BJ (cell line): ENCODE measurements at regions of chr22 and their contacts with region 1.

Region 1: GRCh38 chr22:17171313-17172171 is 12.5 kb upstream of the HDHD5 start:
- DNase-seq: peak; percentile 24
- H3K4me3 ChIP-seq: peak overlapping the region; percentile 65
- H3K27me3 ChIP-seq: no peaks in the 10 kb centered on the region; the same call in 1 of the 2 replicates
- CTCF ChIP-seq: peak; percentile 97

Region 2: GRCh38 chr22:17046566-17047348 is 124.8 kb before region 1 on chr22:
- CTCF ChIA-PET with region 1: no interaction called
- POLR2A ChIA-PET with region 1: no interaction called
- DNase-seq: no peak
- H3K4me3 ChIP-seq: no peak overlapping the region
- H3K27me3 ChIP-seq: no peaks in the 10 kb centered on the region
- CTCF ChIP-seq: no peak

Region 3: DNA sequence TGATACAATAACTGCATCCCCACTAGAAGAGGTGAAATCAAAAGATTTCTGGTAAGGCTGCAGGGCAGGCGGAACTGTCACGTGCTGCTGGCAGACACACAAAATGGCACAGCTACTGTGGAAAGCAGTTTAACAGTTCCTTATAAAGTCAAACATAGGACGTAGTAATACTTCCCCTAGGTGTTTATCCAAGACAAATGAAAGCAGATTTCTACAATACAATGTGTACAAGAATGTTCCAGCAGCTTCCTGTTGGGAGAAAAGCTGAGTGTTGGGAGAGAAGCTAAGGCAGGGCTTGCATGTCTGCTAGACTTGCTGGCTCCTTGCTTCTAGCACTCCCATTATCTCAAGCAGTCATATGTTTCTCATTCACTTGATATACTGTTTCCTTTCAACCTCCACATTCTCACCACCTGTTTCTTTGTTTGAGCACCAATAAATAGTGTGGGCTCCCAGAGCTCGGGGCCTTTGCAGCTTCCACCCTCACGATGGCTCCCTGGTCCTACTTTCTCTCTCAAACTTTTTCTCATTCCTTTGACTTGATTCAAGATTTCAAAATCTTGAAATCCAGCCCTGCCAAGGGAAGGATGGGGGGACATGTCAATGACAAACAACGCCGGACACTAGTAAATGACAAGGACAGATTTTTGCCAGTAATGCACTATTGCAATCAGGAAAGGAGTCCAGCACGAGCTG is 108.0 kb before region 1 on chr22:
- CTCF ChIA-PET with region 1: interaction called, 16 read pairs
- POLR2A ChIA-PET with region 1: no interaction called
- DNase-seq: no peak
- H3K4me3 ChIP-seq: no peak overlapping the region
- H3K27me3 ChIP-seq: no peaks in the 10 kb centered on the region
- CTCF ChIP-seq: no peak

Region 4: DNA sequence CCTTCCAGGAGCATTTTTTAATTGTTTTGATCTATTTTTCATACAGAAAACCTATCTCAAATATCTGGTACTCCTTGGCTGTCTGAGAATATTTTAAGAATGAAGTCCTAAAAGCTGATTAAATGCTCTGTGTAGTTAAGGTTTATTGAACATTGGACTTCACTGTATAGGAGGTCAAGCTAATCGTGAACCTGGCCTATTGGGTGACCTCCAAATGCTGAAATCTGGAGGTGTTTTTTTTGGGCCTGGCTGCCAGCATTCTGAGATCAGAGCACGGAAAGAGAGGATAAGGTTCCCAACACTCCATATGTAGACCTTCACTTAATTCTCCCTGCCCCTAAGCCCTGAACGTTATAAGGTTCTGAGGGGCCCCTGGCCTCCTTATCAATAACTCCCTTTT is 78.5 kb before region 1 on chr22:
- CTCF ChIA-PET with region 1: interaction called, 24 read pairs
- POLR2A ChIA-PET with region 1: no interaction called
- DNase-seq: no peak
- H3K4me3 ChIP-seq: no peak overlapping the region
- H3K27me3 ChIP-seq: no peaks in the 10 kb centered on the region
- CTCF ChIP-seq: no peak

Region 5: DNA sequence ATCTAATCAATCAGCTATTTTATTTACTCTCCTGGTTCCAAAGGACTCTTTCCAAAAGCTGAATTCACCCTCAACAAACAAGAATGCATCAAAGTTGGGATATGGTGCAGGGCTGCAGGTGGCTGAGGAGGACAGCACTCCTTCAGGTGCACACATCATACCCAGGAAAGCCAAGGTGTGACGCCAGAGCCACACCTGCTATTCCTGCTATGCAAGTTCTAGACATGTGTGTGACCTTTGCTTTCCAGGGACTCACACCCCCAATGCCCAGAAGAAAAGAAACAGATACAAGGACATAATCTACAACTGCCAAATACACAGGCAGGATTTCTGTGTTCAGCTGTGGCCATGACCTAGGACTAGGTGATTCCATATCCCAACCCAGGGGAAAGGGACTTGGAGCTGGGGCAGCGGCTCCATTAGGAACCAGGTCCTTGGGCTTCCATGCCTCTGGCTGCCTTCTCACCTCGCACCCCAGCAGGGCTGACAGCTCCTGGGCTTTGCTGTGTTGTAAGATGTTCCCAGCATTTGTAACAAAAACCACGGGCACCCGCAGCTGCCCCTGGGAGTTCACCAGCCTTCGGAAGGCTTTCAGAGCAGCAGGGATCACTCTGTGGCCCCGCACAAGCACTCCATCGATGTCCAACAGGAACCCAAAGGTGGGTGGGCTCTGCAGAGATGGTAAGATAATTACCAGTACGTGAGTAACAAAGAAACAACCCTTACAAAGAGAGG is 22.3 kb before region 1 on chr22:
- CTCF ChIA-PET with region 1: interaction called, 16 read pairs
- POLR2A ChIA-PET with region 1: no interaction called
- DNase-seq: no peak
- H3K4me3 ChIP-seq: no peak overlapping the region
- H3K27me3 ChIP-seq: no peaks in the 10 kb centered on the region
- CTCF ChIP-seq: no peak

Region 6: GRCh38 chr22:17199003-17199731 is 27.6 kb after region 1 on chr22:
- CTCF ChIA-PET with region 1: interaction called, 49 read pairs
- POLR2A ChIA-PET with region 1: no interaction called
- DNase-seq: no peak
- H3K4me3 ChIP-seq: peak overlapping the region; percentile 3
- H3K27me3 ChIP-seq: no peaks in the 10 kb centered on the region
- CTCF ChIP-seq: no peak

Region 7: GRCh38 chr22:17508110-17508509 is 336.6 kb after region 1 on chr22:
- CTCF ChIA-PET with region 1: interaction called, 12 read pairs
- POLR2A ChIA-PET with region 1: no interaction called
- DNase-seq: no peak
- H3K4me3 ChIP-seq: no peak overlapping the region
- H3K27me3 ChIP-seq: no peaks in the 10 kb centered on the region; the same call in none of the 2 replicates
- CTCF ChIP-seq: no peak